BJ (cell line): ENCODE measurements at regions of chr1 and their contacts with region 1.

Region 1: GRCh38 chr1:68120136-68120791 is 69.8 kb upstream of the DIRAS3 start:
- DNase-seq: peak; percentile 26
- H3K4me3 ChIP-seq: no peak overlapping the region
- H3K27me3 ChIP-seq: no peaks in the 10 kb centered on the region
- CTCF ChIP-seq: peak; percentile 75

Region 2: GRCh38 chr1:68065766-68066165 is 54.5 kb before region 1 on chr1:
- CTCF ChIA-PET with region 1: no interaction called
- POLR2A ChIA-PET with region 1: no interaction called
- DNase-seq: no peak
- H3K4me3 ChIP-seq: no peak overlapping the region
- H3K27me3 ChIP-seq: no peaks in the 10 kb centered on the region
- CTCF ChIP-seq: no peak

Region 3: DNA sequence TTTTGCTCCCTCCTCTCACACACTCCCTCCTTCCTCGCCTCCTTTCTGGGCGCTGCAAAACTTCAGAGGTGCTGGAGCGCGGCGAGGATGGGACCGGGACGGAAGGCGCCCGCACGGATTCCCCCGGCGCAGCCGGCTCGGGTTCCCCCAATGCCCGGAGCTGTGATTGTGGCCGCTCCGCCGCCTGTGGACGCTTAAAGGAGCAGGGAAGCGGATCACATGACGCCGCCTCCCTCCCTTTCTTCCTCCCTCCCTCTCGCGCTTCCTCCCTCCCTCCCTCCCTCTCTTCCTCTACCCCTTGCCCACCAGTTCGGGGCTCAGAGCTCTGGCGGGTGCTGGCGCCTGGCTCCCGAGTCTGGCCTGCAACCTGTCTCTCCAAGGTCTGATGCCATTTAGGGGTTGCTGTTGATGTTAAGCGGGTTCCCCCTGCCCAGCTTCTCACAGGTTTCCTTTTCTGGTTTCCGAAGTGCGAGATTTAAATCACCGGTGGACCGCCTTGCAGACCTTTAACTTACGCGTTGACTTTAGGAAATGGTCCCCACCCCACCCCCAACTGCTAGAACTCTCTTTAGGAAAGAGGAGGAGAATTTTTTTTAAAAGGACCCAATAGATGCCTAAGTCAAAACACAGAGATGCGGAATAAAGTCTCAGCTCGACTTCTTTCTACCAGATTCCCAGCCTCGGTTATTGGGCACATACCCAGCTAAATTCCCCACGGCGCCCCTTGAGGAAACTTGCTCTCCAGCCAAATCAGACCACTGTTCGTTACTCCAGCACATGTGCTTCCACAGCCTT is 112.3 kb after region 1 on chr1 and contains the start of gene WLS:
- CTCF ChIA-PET with region 1: interaction called, 27 read pairs
- POLR2A ChIA-PET with region 1: no interaction called
- DNase-seq: no peak
- H3K4me3 ChIP-seq: peak within 1 kb of the TSS; percentile 78
- H3K27me3 ChIP-seq: no peaks in the 10 kb centered on the region
- CTCF ChIP-seq: peak; percentile 44
- polyA plus RNA-seq, gene WLS: 28.4 and 34.9 TPM in 2 replicates

Region 4: GRCh38 chr1:68321084-68321685 is 200.9 kb after region 1 on chr1:
- CTCF ChIA-PET with region 1: interaction called, 106 read pairs
- POLR2A ChIA-PET with region 1: no interaction called
- DNase-seq: no peak
- H3K4me3 ChIP-seq: no peak overlapping the region
- H3K27me3 ChIP-seq: peaks cover 4% of the 10 kb centered on the region
- CTCF ChIP-seq: peak; percentile 82

Region 5: GRCh38 chr1:68331117-68331865 is 211.0 kb after region 1 on chr1:
- CTCF ChIA-PET with region 1: interaction called, 499 read pairs
- POLR2A ChIA-PET with region 1: no interaction called
- DNase-seq: peak; percentile 87
- H3K4me3 ChIP-seq: no peak overlapping the region
- H3K27me3 ChIP-seq: peaks cover 2% of the 10 kb centered on the region; the same call in 1 of the 2 replicates
- CTCF ChIP-seq: no peak

Region 6: GRCh38 chr1:68346188-68346808 is 226.0 kb after region 1 on chr1:
- CTCF ChIA-PET with region 1: interaction called, 499 read pairs
- POLR2A ChIA-PET with region 1: no interaction called
- DNase-seq: no peak
- H3K4me3 ChIP-seq: no peak overlapping the region
- H3K27me3 ChIP-seq: peaks cover 6% of the 10 kb centered on the region
- CTCF ChIP-seq: peak; percentile 50

Region 7: GRCh38 chr1:68442822-68443556 is 322.7 kb after region 1 on chr1:
- CTCF ChIA-PET with region 1: interaction called, 19 read pairs
- POLR2A ChIA-PET with region 1: no interaction called
- DNase-seq: peak; percentile 2
- H3K4me3 ChIP-seq: no peak overlapping the region
- H3K27me3 ChIP-seq: no peaks in the 10 kb centered on the region
- CTCF ChIP-seq: peak; percentile 66